HCT116 (cell line): ENCODE measurements at regions of chr1 and their contacts with region 1.

Region 1: DNA sequence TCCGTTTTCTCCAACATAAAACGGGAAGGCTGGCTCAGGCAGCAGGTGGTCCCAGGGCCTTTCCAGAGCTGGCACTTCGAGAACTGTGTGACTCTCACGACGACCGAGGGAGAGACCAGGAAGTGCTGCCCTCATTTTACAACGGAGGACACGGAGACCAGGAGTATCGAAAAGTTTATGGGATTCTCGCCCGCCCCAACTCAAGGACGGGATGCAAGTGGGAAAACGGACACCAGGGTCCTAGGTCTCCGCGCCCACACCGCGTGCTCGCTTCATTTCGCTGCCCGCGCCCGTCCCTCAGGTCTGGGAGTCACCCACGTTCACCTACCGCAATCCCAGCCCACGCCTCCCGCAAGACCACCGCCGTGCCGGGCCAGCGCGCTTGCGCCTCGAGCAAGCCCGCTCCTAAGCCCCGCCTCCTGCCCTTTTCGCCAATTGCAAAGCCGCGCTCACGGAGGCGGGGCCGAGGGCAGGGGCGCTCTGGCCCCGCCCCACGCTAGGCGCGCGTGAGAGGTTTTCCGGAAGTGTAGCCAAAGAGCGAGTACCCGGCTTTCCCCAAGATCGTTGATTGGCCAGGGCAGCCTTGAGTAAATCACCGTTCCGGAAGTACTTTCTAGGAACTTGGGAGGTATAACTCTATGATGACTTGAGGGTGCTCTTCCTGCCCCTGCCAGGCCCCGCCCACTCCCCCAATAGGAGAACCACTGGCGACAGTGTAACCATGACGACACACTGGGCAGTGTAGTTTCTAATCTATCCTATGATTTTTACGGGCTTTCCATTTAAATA is at the start of gene PARS2:
- DNase-seq: peak; percentile 99
- ATAC-seq: peak; percentile 93
- H3K4me3 ChIP-seq: peak within 1 kb of the TSS; percentile 97 to 98
- H3K27ac ChIP-seq: peak within 1 kb of the TSS; percentile 52
- H3K4me1 ChIP-seq: peaks cover 5 to 18% of the 10 kb centered on the region in 2 experiments; a peak in 3 of 4 replicates
- H3K27me3 ChIP-seq: no peaks in the 10 kb centered on the region
- CTCF ChIP-seq: no peak
- POLR2A ChIP-seq: peak; percentile 47
- RAD21 ChIP-seq: no peak
- total RNA-seq, gene PARS2: 9.6 TPM

Region 2: GRCh38 chr1:54355931-54356679 is 408.2 kb before region 1 on chr1:
- CTCF ChIA-PET with region 1: no interaction called
- POLR2A ChIA-PET with region 1: no interaction called
- RAD21 ChIA-PET with region 1: no interaction called
- intact Hi-C with region 1: no loop called
- DNase-seq: no peak
- ATAC-seq: no peak
- H3K4me3 ChIP-seq: no peak overlapping the region
- H3K27ac ChIP-seq: no peak overlapping the region
- H3K4me1 ChIP-seq: 0 out of 4 replicates have a peak, but pooled peaks cover 0 to 4% of the 10 kb centered on the region in 2 experiments
- H3K27me3 ChIP-seq: no peaks in the 10 kb centered on the region
- CTCF ChIP-seq: no peak
- POLR2A ChIP-seq: no peak
- RAD21 ChIP-seq: no peak

Region 3: DNA sequence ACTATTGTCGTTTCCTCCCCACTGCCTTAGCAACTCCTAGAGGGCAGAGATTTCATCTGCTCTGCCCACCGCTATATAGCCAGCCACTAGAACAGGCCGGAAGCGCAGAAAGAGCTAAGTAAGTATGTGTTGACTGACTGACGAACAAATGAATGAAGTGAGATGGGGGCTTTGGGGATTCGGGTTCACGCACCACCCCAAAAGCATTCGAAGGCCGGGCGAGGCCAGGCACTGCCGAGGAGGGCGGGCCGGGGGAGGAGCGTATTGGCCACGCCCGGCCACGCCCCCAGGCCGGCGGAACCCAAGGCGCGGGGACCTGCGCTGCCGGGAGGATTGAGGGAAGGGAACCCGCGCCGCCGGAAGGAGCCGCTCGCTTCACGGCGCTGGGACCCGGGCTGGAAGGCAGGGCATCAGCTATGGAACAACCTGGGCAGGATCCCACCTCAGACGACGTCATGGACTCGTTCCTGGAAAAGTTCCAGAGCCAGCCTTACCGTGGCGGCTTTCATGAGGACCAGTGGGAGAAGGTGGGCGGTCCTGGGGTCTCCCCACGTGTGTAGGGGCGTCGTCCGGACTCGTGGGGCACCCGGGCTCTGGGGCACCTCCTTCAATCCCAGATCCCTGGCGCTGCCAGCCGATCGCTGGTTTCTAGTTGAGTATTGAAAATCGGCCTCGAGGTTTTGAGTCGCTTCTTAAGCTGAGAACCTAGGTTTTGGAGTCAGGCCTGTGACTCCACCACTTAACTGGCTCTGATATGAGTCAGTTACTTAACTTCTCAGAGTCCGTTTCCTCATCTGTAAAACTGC is 48.6 kb before region 1 on chr1 and contains the start of gene TTC4:
- CTCF ChIA-PET with region 1: no interaction called
- POLR2A ChIA-PET with region 1: no interaction called
- RAD21 ChIA-PET with region 1: no interaction called
- intact Hi-C with region 1: loop called (anchors 2 kb)
- DNase-seq: peak; percentile 67
- ATAC-seq: peak; percentile 95
- H3K4me3 ChIP-seq: peak within 1 kb of the TSS; percentile 97 to 98
- H3K27ac ChIP-seq: peak within 1 kb of the TSS; percentile 65
- H3K4me1 ChIP-seq: peaks cover 8 to 14% of the 10 kb centered on the region in 2 experiments; a peak in 3 of 4 replicates
- H3K27me3 ChIP-seq: no peaks in the 10 kb centered on the region
- CTCF ChIP-seq: no peak
- POLR2A ChIP-seq: peak; percentile 80
- RAD21 ChIP-seq: no peak
- total RNA-seq, gene TTC4: 26.3 TPM